BJ (cell line): ENCODE measurements at regions of chr5 and their contacts with region 1.

Region 1: GRCh38 chr5:41940641-41941040 is 15.6 kb downstream of the FBXO4 start:
- DNase-seq: no peak
- H3K4me3 ChIP-seq: no peak overlapping the region
- H3K27me3 ChIP-seq: no peaks in the 10 kb centered on the region
- CTCF ChIP-seq: no peak

Region 2: DNA sequence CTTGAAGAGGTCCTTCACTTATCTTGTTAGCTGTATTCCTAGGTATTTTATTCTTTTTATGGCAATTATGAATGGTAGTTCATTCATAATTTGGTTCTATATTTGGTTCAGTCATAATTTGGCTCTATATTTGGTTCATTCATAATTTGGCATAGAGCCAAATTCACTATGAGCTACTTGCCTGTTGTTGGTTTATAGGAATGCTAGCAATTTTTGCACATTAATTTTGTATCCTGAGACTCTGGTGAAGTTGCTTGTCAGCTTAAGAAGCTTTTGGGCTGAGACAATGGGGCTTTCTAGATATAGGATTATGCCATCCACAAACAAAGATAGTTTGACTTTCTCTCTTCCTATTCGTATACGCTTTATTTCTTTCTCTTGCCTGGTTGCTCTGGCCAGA is 572.5 kb before region 1 on chr5:
- CTCF ChIA-PET with region 1: no interaction called
- POLR2A ChIA-PET with region 1: interaction called, 14 read pairs
- DNase-seq: no peak
- H3K4me3 ChIP-seq: no peak overlapping the region
- H3K27me3 ChIP-seq: no peaks in the 10 kb centered on the region
- CTCF ChIP-seq: no peak